ENCODE measurements at regions of chr3 and their contacts with region 1.

Region 1: DNA sequence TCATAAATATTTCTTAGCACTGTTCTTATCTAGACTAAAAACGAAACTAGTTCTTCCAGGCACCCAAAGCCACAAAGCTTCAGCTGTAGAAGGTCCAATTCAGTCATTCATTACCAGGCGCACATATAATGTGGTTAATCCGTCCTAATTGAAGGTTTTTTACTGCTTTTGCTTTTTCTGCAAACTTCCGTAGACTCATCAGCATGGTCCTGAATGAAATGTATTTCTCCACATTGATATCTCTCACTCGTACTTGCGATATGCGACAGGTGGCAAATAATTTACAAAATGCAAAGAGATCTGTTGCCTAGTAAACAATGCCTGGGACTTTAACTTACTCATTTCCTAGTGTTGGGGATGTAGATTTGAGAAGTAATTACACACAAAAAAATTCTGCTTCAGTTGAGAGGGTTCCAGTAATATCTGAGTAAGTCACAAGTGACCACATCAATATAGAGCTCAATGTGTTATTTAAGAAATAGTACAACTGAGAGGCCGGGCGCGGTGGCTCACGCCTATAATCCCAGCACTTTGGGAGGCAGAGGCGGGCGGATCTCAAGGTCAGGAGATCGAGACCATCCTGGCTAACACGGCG is 75.0 kb upstream of the MBNL1 start:
- DNase-seq: no peak
- H3K4me3 Mint-ChIP-seq: peak overlapping the region; percentile 71
- H3K27ac Mint-ChIP-seq: peak overlapping the region; percentile 87
- H3K4me1 Mint-ChIP-seq: peaks cover 87% of the 10 kb centered on the region
- H3K27me3 Mint-ChIP-seq: no peaks in the 10 kb centered on the region

Region 2: GRCh38 chr3:150603153-150603979 is 1590.4 kb before region 1 on chr3 and contains the start of gene SELENOT:
- intact Hi-C with region 1: loop called (anchors 10 kb)
- DNase-seq: peak; percentile 96
- H3K4me3 Mint-ChIP-seq: peak within 1 kb of the TSS; percentile 99
- H3K27ac Mint-ChIP-seq: peak within 1 kb of the TSS; percentile 99
- H3K4me1 Mint-ChIP-seq: peaks cover 80% of the 10 kb centered on the region
- H3K27me3 Mint-ChIP-seq: peaks cover 2% of the 10 kb centered on the region
- total RNA-seq, gene SELENOT: 139 and 140 TPM in 2 replicates

Region 3: GRCh38 chr3:152127058-152127457 is 66.7 kb before region 1 on chr3:
- intact Hi-C with region 1: loop called (anchors 1 kb)
- DNase-seq: no peak
- H3K4me3 Mint-ChIP-seq: no peak overlapping the region
- H3K27ac Mint-ChIP-seq: peak overlapping the region; percentile 49
- H3K4me1 Mint-ChIP-seq: peaks cover 28% of the 10 kb centered on the region
- H3K27me3 Mint-ChIP-seq: peaks cover 19% of the 10 kb centered on the region

Region 4: DNA sequence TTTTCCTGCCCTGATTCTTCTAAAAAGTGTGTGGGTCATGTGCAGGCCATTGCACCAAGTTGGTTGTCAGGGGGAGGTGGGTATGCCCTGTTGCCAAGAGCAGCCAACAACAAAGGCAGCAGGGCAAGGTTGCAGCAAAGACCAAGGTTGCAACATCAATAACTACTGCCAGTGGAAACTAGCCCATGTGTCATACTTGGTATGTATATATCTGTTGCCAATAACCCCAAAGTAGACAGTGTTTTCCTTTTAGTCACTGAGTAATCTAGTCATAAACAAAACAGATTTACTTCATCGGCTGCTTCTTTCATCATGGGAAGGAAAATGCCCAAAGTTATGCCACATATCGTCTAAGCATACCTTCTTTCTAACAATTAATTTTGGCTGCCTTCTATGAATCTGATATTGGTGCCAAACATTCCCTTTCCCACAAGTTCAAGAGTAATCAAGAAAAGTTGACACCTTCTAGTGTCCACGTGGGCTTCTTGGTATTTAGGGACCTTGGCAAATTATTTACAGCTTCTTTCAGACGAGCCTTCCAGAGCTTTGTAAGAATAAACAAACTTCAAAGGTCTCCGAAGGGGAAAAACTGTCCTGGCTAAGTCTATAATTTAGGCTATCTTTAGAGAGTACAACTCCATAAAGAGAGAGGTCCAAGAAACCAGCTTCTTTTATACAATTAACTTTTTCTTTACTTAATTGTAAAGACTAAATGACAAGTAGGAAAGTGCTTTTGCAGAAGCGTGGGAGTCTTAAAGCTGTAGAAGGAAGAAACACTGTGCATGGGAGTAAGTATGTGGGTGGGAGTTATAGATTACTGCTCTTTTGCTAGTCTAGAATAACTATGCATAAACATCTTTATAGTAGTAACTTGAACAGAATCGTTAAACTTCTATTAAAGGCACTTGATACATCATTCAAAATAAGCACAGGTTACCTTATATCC is 65.0 kb after region 1 on chr3:
- intact Hi-C with region 1: loop called (anchors 1 kb)
- DNase-seq: peak; percentile 62
- H3K4me3 Mint-ChIP-seq: peak overlapping the region; percentile 81
- H3K27ac Mint-ChIP-seq: peak overlapping the region; percentile 98
- H3K4me1 Mint-ChIP-seq: peaks cover 90% of the 10 kb centered on the region
- H3K27me3 Mint-ChIP-seq: no peaks in the 10 kb centered on the region

Region 5: GRCh38 chr3:152328841-152329240 is 135.1 kb after region 1 on chr3:
- intact Hi-C with region 1: no loop called
- DNase-seq: no peak
- H3K4me3 Mint-ChIP-seq: no peak overlapping the region
- H3K27ac Mint-ChIP-seq: peak overlapping the region; percentile 18
- H3K4me1 Mint-ChIP-seq: peaks cover 81% of the 10 kb centered on the region
- H3K27me3 Mint-ChIP-seq: no peaks in the 10 kb centered on the region

Region 6: GRCh38 chr3:152402695-152403451 is 209.1 kb after region 1 on chr3:
- intact Hi-C with region 1: loop called (anchors 5 kb)
- DNase-seq: no peak
- H3K4me3 Mint-ChIP-seq: no peak overlapping the region
- H3K27ac Mint-ChIP-seq: peak overlapping the region; percentile 86
- H3K4me1 Mint-ChIP-seq: peaks cover 79% of the 10 kb centered on the region
- H3K27me3 Mint-ChIP-seq: no peaks in the 10 kb centered on the region